Activated T-helper 2 cell treated with anti-CD3 and anti-CD28 coated beads, Interferon-gamma antibody, Interleukin-2, Interleukin-4, amounts not matched to agents 10 μg/mL and 5 μg/mL and 100 μg/mL, durations not matched to agents 14 hours and 24 hours and 36 hours (primary cell): ENCODE measurements at regions of chr5 and their contacts with region 1.

Region 1: DNA sequence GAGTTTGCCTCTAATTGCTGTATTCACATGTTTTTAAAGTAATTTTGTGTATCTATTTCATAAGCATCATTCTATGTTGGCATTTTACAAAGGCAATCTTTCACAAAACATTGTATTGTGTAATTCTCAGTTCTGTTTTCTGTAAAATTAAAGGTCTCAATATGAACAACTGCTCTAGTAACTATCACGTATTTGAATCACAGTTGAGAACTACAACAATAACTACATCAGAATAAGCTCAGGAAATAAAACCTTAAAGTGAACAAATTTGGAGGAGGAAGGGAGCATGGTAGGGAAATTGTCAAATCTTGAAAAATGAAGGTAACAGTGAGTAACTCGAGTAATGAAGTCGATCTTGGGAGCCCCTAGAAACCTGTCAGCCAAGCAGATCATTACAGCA is 22.5 kb upstream of the CAMK4 start:
- DNase-seq: no peak
- H3K4me3 Mint-ChIP-seq: no peak overlapping the region
- H3K27ac Mint-ChIP-seq: no peak overlapping the region
- H3K4me1 Mint-ChIP-seq: peaks cover 15% of the 10 kb centered on the region
- H3K27me3 Mint-ChIP-seq: peaks cover 9% of the 10 kb centered on the region

Region 2: GRCh38 chr5:111167551-111167950 is 34.2 kb before region 1 on chr5:
- intact Hi-C with region 1: loop called (anchors 2 kb)
- DNase-seq: no peak
- H3K4me3 Mint-ChIP-seq: no peak overlapping the region
- H3K27ac Mint-ChIP-seq: no peak overlapping the region
- H3K4me1 Mint-ChIP-seq: peaks cover 10% of the 10 kb centered on the region
- H3K27me3 Mint-ChIP-seq: peaks cover 3% of the 10 kb centered on the region